ENCODE measurements at regions of chr5 and their contacts with region 1.

Region 1: GRCh38 chr5:57626703-57627102 is 144.1 kb upstream of the ACTBL2 start:
- DNase-seq: no peak
- H3K4me3 ChIP-seq: no peak overlapping the region
- H3K27ac ChIP-seq: no peak overlapping the region
- H3K4me1 ChIP-seq: no peaks in the 10 kb centered on the region
- H3K27me3 ChIP-seq: no peaks in the 10 kb centered on the region
- CTCF ChIP-seq: no peak
- POLR2A ChIP-seq: no peak

Region 2: DNA sequence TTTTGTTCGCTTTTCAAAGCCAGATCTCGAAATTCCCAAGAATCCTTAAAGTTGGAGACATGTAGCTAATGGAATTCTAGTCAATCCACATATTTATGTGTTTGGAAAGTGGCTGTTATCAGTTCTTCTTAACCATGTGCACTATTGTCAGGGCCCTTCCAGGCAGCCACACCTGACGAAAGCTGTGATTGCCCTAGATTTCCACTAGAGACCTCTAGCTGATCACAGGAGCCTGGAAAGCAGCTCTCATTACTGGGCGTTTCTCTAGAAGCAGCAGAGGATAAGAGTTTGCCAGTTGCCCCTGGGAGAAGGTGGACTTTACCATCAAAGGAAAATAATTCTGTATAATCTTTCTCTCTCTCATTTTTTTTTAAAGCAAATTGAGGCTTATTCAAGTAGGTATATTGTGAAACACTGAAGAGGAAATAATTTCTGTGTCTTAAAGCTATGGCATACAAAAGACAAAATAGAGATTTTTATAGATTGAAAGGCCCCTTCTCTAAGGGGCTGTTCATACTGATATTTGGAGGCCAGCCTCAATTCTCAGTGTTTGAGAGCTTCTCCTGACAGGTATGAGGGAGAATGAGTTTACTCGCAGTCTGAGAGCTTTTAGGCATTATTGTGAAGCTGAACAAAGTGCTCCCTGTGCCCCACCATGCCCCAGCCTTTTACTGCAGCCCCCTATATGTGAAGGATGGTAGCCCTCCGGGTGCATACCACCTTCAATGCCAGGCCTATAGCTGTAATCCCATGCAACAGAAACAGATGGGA is 261.3 kb after region 1 on chr5:
- intact Hi-C with region 1: loop called (anchors 10 kb)
- DNase-seq: no peak
- H3K4me3 ChIP-seq: no peak overlapping the region
- H3K27ac ChIP-seq: no peak overlapping the region
- H3K4me1 ChIP-seq: no peaks in the 10 kb centered on the region
- H3K27me3 ChIP-seq: no peaks in the 10 kb centered on the region
- CTCF ChIP-seq: peak in 1 of 3 experiments; percentile 27
- POLR2A ChIP-seq: no peak

Measured in vagina (tissue), 2 donors.